ENCODE measurements at regions of chr19 and their contacts with region 1.

Region 1: DNA sequence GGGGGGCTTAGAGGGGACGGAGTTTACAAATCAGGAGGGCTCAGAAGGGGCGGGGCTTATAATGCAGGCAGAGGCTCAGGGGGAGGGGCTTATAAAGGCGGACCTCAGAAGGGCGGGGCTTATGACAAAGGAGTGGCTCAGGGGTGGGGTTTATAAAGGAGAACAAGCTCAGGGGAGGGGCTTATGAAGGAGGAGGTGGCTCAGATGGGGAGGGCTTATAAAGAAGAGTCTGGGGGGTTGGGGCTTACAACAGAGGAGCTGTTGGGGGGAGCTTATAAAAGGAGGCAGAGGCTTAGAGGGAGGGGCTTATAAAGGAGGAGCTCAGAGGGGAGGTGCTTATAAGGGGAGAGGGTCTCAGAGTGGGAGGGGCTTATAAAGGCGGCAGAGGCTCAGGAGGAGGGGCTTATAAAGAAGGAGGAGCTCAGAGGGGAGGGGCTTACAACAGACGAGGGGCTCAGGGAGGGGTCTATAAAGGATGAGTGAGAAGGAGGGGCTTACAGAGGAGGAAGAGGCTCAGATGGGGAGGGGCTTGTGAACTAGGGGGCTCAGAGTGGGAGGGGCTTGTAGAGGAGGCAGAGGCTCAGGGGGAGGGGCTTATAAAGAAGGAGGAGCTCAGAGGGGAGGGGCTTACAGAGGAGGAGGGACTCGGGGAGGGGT is 1.0 kb downstream of the SMIM24 start:
- DNase-seq: peak; percentile 16
- H3K4me3 Mint-ChIP-seq: no peak overlapping the region
- H3K27ac Mint-ChIP-seq: no peak overlapping the region
- H3K4me1 Mint-ChIP-seq: peaks cover 6% of the 10 kb centered on the region
- H3K27me3 Mint-ChIP-seq: no peaks in the 10 kb centered on the region

Region 2: GRCh38 chr19:3284759-3285646 is 194.3 kb before region 1 on chr19:
- intact Hi-C with region 1: loop called (anchors 1 kb)
- DNase-seq: peak; percentile 50
- H3K4me3 Mint-ChIP-seq: no peak overlapping the region
- H3K27ac Mint-ChIP-seq: no peak overlapping the region
- H3K4me1 Mint-ChIP-seq: no peaks in the 10 kb centered on the region
- H3K27me3 Mint-ChIP-seq: peaks cover 14% of the 10 kb centered on the region

Region 3: DNA sequence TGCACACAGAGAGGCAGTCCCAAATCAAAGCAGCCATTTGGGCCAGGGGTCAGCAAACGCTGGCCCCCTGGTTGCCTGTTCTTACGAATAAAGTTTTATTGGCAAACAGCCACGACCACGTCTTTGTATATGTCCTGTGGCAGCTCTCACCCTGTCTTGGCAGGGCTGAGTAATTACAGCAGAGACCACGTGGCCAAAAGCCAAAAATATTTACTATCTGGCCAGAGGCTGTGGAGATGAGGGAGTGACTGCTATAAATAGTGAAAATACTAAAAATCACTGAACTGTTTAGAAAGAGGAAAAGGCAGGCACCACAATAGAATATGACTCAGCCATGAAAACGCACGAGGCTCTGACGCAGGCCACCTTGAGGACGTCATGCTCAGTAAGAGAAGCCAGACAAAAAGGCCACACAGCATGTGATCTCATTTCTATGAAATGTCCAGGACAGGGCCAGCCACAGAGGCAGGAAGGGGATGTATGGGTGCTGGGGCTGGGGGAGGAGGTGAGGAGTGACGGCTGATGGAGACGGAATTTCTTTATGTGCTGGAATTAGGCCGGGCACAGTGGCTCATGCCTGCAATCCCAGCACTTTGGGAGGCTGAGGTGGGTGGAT is 28.4 kb before region 1 on chr19:
- intact Hi-C with region 1: no loop called
- DNase-seq: no peak
- H3K4me3 Mint-ChIP-seq: no peak overlapping the region
- H3K27ac Mint-ChIP-seq: no peak overlapping the region
- H3K4me1 Mint-ChIP-seq: no peaks in the 10 kb centered on the region
- H3K27me3 Mint-ChIP-seq: no peaks in the 10 kb centered on the region

Region 4: DNA sequence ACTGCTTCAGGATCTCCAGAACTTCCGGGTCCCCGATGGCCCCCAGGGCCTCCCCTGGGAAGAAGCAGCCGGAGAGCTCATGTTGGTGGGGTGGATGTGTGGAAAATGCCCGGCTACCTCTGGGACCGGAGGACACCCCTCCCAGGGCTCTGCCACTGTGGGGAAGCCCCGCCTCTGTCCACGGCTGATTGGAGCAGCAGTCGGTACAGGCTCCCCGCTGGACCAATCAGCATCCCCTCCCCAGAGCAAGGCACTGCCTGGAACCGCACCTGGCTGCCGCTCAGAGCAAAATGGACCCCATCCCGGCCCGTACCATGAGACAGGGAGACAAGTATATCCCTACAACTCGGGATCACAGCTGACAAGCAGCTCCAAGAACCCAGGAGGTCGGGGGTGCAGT is 14.7 kb after region 1 on chr19:
- intact Hi-C with region 1: loop called (anchors 2 kb)
- DNase-seq: no peak
- H3K4me3 Mint-ChIP-seq: peak overlapping the region; percentile 39
- H3K27ac Mint-ChIP-seq: no peak overlapping the region
- H3K4me1 Mint-ChIP-seq: peaks cover 16% of the 10 kb centered on the region
- H3K27me3 Mint-ChIP-seq: no peaks in the 10 kb centered on the region

Measured in activated T-helper 1 cell treated with anti-CD3 and anti-CD28 coated beads, Interleukin-12 subunit alpha, Interleukin-12 subunit beta, Interleukin-2, Interleukin-4 antibody, amounts not matched to agents 30 ng/mL and 10 ng/mL and 1 ng/mL, durations not matched to agents 14 hours and 24 hours and 36 hours (primary cell).